ENCODE measurements at regions of chr15 and their contacts with region 1.

Region 1: GRCh38 chr15:60006203-60006862 is 2.2 kb downstream of the FOXB1 start:
- DNase-seq: peak; percentile 88 to 91
- H3K4me3 ChIP-seq: peak overlapping the region; percentile 82
- H3K27ac ChIP-seq: peak overlapping the region; percentile 95
- H3K4me1 ChIP-seq: peaks cover 28% of the 10 kb centered on the region
- H3K27me3 ChIP-seq: no peaks in the 10 kb centered on the region
- CTCF ChIP-seq: no peak

Region 2: GRCh38 chr15:59725172-59725486 is 281.2 kb before region 1 on chr15:
- CTCF ChIA-PET with region 1: no interaction called
- POLR2A ChIA-PET with region 1: no interaction called
- intact Hi-C with region 1: loop called (anchors 10 kb)
- DNase-seq: no peak
- H3K4me3 ChIP-seq: no peak overlapping the region
- H3K27ac ChIP-seq: no peak overlapping the region
- H3K4me1 ChIP-seq: no peaks in the 10 kb centered on the region
- H3K27me3 ChIP-seq: no peaks in the 10 kb centered on the region
- CTCF ChIP-seq: no peak

Region 3: DNA sequence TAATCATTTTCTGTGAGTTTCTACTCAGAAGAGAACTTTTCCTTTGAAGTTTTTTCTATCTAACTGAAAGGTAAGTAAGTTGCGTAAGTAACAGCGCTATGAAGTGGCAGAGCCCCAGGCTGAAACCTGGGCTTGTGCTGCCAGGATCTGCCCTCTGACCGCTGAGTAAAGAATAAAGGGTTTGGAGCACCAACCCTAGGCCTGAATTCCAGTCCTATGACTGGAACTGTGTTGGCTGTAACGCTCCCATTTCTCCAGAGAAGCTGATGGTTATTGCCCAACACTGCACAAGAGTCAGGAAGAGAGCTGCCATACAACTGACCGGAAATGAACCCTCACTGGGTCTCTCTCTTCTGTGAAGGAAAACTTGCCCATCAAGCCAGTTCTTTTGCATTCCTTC is 84.8 kb after region 1 on chr15:
- CTCF ChIA-PET with region 1: interaction called, 3 read pairs
- POLR2A ChIA-PET with region 1: interaction called, 6 read pairs
- intact Hi-C with region 1: loop called (anchors 1 kb)
- DNase-seq: peak; percentile 87 to 98
- H3K4me3 ChIP-seq: no peak overlapping the region
- H3K27ac ChIP-seq: peak overlapping the region; percentile 96
- H3K4me1 ChIP-seq: peaks cover 69% of the 10 kb centered on the region
- H3K27me3 ChIP-seq: no peaks in the 10 kb centered on the region
- CTCF ChIP-seq: no peak

Measured in PC-9 (cell line).